ENCODE measurements at regions of chr20 and their contacts with region 1.

Region 1: DNA sequence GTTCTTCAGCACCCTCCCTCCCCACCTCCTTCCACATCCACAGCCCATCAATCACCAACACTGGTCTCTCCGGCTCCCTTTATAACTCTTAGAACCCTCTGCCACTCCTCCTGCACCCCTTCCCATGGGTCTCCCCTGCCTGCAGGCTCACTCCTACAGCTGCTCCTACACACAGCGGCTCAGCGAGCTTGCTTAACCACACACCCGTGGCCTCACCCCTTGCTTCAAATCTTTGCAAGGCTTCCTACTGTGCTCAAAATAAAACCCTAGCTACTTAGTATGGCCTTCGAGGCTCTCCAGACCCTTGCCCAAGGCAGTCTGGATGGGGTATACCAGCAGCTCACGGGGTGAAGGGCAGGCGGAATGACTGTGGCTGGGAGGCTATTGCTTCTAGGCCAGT is 63.7 kb downstream of the JPH2 start:
- DNase-seq: no peak
- H3K4me3 Mint-ChIP-seq: no peak overlapping the region
- H3K27ac Mint-ChIP-seq: no peak overlapping the region
- H3K4me1 Mint-ChIP-seq: no peaks in the 10 kb centered on the region
- H3K27me3 Mint-ChIP-seq: no peaks in the 10 kb centered on the region
- CTCF ChIP-seq: no peak

Region 2: DNA sequence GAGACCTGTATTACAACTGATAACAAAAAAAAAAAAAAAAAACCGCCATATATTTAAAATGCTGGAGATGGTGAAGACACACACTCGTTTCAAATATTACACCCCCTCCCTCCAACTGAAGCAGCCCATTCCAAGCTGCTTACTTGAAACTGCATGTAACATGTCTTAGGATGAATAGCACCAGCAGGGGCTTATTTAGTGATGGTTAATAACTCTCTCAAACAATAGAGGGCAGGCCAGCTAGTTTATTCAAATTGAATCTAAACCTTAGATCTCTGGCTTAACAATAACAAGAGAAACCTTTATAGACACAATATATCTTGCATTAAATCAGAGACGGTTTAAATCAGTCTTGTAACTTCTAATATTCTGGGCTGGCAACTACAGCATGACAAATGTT is 73.0 kb after region 1 on chr20:
- CTCF ChIA-PET with region 1: interaction called, 638 read pairs
- POLR2A ChIA-PET with region 1: interaction called, 117 read pairs
- intact Hi-C with region 1: no loop called
- DNase-seq: no peak
- H3K4me3 Mint-ChIP-seq: no peak overlapping the region
- H3K27ac Mint-ChIP-seq: no peak overlapping the region
- H3K4me1 Mint-ChIP-seq: peaks cover 10% of the 10 kb centered on the region
- H3K27me3 Mint-ChIP-seq: peaks cover 11% of the 10 kb centered on the region
- CTCF ChIP-seq: peak; percentile 19